ENCODE measurements at regions of chr7 and their contacts with region 1.

Region 1: GRCh38 chr7:23100697-23101096 is 4.9 kb upstream of the KLHL7 start:
- DNase-seq: no peak
- ATAC-seq: no peak
- H3K4me3 ChIP-seq: no peak overlapping the region
- H3K27ac ChIP-seq: no peak overlapping the region
- H3K4me1 ChIP-seq: peaks cover 5% of the 10 kb centered on the region
- H3K27me3 ChIP-seq: no peaks in the 10 kb centered on the region
- CTCF ChIP-seq: peak in 1 of 7 experiments; percentile 23
- POLR2A ChIP-seq: no peak

Region 2: GRCh38 chr7:23175938-23176337 is 75.2 kb after region 1 on chr7:
- intact Hi-C with region 1: loop called (anchors 5 kb)
- DNase-seq: peak in 1 of 4 donors; percentile 4
- ATAC-seq: no peak
- H3K4me3 ChIP-seq: no peak overlapping the region
- H3K27ac ChIP-seq: no peak overlapping the region
- H3K4me1 ChIP-seq: no peaks in the 10 kb centered on the region
- H3K27me3 ChIP-seq: no peaks in the 10 kb centered on the region
- CTCF ChIP-seq: no peak
- POLR2A ChIP-seq: no peak

Region 3: DNA sequence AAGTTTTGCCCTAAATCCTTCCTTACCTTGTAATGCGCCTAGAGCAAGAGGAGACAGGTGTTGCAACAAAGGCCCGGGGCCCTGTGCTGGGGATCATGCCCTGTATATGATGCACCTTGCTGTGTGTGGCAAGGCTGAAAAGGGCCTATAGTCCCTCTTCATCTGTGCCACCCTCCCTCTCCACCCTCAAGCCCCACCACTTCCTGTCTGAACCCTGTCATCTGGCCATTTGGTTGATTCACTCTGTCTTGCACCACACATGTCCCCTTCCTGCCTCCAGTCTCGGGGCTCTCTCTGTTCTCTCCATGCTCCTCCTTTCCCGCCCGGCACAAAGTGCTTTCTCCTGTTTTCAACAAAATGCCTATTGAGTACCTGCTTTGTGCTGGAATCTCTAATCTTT is 186.9 kb after region 1 on chr7:
- intact Hi-C with region 1: no loop called
- DNase-seq: no peak
- ATAC-seq: no peak
- H3K4me3 ChIP-seq: no peak overlapping the region
- H3K27ac ChIP-seq: no peak overlapping the region
- H3K4me1 ChIP-seq: peaks cover 10% of the 10 kb centered on the region
- H3K27me3 ChIP-seq: no peaks in the 10 kb centered on the region
- CTCF ChIP-seq: no peak
- POLR2A ChIP-seq: no peak